Activated T-helper 2 cell treated with anti-CD3 and anti-CD28 coated beads, Interferon-gamma antibody, Interleukin-2, Interleukin-4, amounts not matched to agents 10 μg/mL and 5 μg/mL and 100 μg/mL, durations not matched to agents 14 hours and 24 hours and 36 hours (primary cell): ENCODE measurements at regions of chr1 and their contacts with region 1.

Region 1: DNA sequence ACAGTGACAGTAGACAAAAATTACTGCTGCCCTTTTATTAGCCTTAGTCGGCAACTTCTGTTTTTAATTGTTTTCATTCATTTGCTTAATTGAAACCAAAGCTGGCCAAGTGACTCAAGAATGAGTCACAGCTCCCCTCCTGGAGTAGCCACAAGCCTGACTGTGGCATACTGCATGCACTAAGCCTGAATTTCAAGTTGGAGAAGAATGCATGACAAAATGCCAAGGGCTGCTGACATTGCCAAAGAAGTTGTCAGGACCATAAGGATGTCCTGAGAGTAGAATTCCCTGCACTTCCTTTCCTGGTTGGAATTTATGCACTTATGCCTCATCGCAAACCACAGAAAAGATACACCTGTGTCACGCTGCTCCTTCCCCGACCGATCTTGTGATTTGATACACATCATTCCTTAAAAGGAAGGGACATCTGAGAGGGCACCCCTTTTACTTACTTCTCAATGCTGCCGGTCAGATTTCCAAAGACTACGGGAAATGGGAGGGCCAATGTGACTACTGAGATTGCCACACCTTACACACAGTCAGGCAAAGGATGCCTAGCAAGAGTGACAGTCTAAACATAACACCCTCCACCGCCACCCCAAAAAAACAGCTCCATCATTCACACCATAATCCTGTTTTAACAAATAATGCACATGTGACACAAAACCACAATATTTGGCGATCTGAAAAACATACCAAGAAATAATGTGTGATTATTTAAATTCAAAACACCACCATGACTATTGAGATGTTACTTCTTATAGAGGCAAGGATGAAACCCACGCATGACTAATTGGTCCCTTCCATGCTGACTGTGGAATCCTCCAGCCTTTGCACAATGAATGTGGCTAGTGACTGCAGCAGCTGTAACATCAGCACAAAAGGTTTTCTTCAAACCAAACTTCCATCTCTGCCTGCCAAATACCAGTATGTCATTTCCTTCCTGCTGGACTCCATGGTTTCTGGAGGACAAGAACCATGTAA is 28.2 kb downstream of the VAV3 start:
- DNase-seq: no peak
- H3K4me3 Mint-ChIP-seq: peak overlapping the region; percentile 18
- H3K27ac Mint-ChIP-seq: peak overlapping the region; percentile 49
- H3K4me1 Mint-ChIP-seq: peaks cover 57% of the 10 kb centered on the region
- H3K27me3 Mint-ChIP-seq: no peaks in the 10 kb centered on the region

Region 2: GRCh38 chr1:107486349-107486748 is 450.4 kb before region 1 on chr1:
- intact Hi-C with region 1: no loop called
- DNase-seq: no peak
- H3K4me3 Mint-ChIP-seq: no peak overlapping the region
- H3K27ac Mint-ChIP-seq: no peak overlapping the region
- H3K4me1 Mint-ChIP-seq: no peaks in the 10 kb centered on the region
- H3K27me3 Mint-ChIP-seq: peaks cover 29% of the 10 kb centered on the region

Region 3: DNA sequence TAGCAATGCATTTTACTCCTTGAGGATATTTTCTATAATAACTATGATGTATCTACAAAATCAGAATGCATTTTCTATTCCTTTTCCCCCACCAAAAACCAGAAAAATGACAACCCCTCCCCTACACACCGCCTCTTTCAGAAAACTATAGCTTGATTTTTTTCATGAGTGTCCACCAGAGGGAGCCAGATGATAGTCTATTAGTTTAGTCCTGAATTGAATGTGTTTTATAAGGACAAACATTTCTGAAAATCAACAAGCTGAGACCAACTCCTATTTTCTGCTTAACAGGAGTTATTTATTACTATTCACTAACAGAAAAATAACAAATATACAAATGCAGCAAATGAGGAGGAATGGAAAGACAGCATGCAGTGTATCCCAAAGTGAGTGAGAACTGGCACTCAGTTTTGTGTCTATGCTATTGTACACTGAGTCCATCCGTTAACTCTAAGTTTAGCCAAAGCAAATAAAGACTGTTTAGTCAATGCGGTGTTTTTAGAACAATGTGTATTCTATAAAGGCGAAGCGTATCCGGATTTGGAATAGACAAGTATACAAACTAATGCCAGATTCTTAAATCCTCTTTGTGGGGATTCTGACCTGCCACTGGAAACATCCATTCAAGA is 154.5 kb before region 1 on chr1:
- intact Hi-C with region 1: loop called (anchors 5 kb)
- DNase-seq: no peak
- H3K4me3 Mint-ChIP-seq: no peak overlapping the region
- H3K27ac Mint-ChIP-seq: no peak overlapping the region
- H3K4me1 Mint-ChIP-seq: peaks cover 19% of the 10 kb centered on the region
- H3K27me3 Mint-ChIP-seq: no peaks in the 10 kb centered on the region

Region 4: GRCh38 chr1:107820805-107821204 is 116.0 kb before region 1 on chr1:
- intact Hi-C with region 1: loop called (anchors 2 kb)
- DNase-seq: no peak
- H3K4me3 Mint-ChIP-seq: no peak overlapping the region
- H3K27ac Mint-ChIP-seq: peak overlapping the region; percentile 10
- H3K4me1 Mint-ChIP-seq: peaks cover 16% of the 10 kb centered on the region
- H3K27me3 Mint-ChIP-seq: peaks cover 3% of the 10 kb centered on the region

Region 5: DNA sequence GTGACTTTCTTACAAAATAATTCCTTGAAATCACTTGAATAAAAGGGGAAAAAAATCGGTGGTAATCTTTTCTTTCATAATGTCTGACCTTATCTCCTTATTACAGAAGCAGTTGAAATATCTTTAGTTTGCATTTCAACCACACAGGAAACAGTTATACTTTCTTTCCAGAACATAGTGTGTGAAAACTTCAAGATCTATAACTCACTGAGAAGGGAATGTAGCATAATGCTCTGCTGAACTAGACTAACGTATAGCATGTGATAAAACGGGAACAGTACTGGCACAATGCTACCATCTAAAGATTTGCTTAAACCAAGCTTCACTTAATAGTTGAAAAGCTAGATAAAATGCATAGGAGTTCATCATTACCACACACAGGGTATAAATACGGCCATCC is 16.8 kb before region 1 on chr1:
- intact Hi-C with region 1: loop called (anchors 2 kb)
- DNase-seq: no peak
- H3K4me3 Mint-ChIP-seq: no peak overlapping the region
- H3K27ac Mint-ChIP-seq: no peak overlapping the region
- H3K4me1 Mint-ChIP-seq: peaks cover 21% of the 10 kb centered on the region
- H3K27me3 Mint-ChIP-seq: no peaks in the 10 kb centered on the region

Region 6: DNA sequence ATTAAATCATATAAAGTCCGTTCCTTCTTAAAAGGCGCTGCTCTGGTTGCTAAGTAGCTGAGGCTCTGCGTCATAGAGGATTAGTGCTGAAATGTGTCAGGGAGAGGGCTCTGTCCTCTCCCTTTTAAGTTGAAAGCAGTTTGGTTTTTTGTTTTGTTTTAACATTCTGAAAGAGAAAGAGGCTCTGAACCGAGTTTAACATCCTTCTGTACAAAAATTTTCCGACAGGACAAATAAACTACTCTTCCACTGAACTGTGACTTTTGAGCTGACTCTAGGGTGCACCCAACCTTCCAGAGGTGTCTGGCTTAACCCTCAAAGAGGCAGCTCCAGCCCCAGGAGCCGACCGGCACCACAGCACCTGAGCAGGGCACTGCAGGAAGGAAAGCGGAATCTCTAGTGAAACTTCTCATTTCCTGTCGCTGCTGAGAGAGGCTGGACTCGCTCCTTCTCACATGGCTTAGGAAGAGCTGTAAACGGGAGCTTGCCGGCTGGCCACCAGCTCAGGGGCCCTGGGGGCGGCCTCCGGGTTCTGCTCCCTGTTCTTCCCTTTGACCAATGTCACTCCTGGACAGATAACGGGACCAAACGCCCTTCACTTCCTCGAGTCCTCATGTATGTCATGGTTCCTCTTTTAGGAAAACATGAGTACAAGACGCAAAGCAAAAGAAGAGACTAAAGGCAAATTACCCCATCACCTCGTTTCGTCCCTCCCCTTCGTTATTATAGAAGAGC is 27.0 kb after region 1 on chr1:
- intact Hi-C with region 1: loop called (anchors 1 kb)
- DNase-seq: peak; percentile 32
- H3K4me3 Mint-ChIP-seq: peak overlapping the region; percentile 83
- H3K27ac Mint-ChIP-seq: peak overlapping the region; percentile 85
- H3K4me1 Mint-ChIP-seq: peaks cover 25% of the 10 kb centered on the region
- H3K27me3 Mint-ChIP-seq: peaks cover 3% of the 10 kb centered on the region

Region 7: DNA sequence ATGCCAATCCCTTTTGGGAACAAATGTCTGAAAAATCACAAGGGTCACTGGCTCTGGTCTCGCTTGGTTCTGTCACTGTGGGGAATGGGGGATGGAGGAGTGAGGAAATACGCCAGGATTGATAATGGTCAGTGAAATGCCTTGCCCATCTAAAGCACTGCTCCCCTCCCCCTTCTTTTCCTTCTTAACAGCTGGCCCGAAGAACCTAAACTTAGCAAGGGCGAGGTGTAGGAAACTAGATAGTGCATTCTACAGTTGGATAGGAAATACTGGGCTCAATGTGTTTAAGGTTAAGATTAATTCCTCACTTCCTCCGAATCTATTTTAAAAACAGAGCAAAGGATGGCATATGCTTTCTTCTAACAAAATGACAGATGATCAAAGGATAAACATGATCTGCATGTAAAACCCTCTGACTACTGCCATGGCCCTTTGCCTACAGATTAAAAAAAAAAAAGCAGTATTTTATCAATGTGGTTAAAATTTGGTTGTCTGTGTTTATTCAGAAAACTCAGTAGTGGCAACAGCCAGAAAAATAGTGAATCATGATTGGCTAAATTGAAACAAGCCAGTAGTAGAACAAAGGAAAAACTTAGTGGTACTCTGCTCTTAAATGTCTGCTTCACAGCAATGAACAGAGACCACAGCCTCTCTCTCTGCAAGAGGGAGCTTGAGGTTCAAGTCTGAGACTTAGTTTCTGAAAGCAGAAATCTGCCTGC is 114.3 kb after region 1 on chr1:
- intact Hi-C with region 1: loop called (anchors 2 kb)
- DNase-seq: no peak
- H3K4me3 Mint-ChIP-seq: no peak overlapping the region
- H3K27ac Mint-ChIP-seq: peak overlapping the region; percentile 43
- H3K4me1 Mint-ChIP-seq: peaks cover 4% of the 10 kb centered on the region
- H3K27me3 Mint-ChIP-seq: peaks cover 6% of the 10 kb centered on the region

Region 8: GRCh38 chr1:108082738-108083481 is 146.1 kb after region 1 on chr1:
- intact Hi-C with region 1: no loop called
- DNase-seq: no peak
- H3K4me3 Mint-ChIP-seq: no peak overlapping the region
- H3K27ac Mint-ChIP-seq: no peak overlapping the region
- H3K4me1 Mint-ChIP-seq: peaks cover 47% of the 10 kb centered on the region
- H3K27me3 Mint-ChIP-seq: peaks cover 2% of the 10 kb centered on the region

Region 9: GRCh38 chr1:108590957-108591356 is 654.2 kb after region 1 on chr1:
- intact Hi-C with region 1: loop called (anchors 2 kb)
- DNase-seq: peak; percentile 15
- H3K4me3 Mint-ChIP-seq: no peak overlapping the region
- H3K27ac Mint-ChIP-seq: peak overlapping the region; percentile 14
- H3K4me1 Mint-ChIP-seq: peaks cover 60% of the 10 kb centered on the region
- H3K27me3 Mint-ChIP-seq: no peaks in the 10 kb centered on the region